B cell (primary cell): ENCODE measurements at regions of chr5 and their contacts with region 1.

Region 1: DNA sequence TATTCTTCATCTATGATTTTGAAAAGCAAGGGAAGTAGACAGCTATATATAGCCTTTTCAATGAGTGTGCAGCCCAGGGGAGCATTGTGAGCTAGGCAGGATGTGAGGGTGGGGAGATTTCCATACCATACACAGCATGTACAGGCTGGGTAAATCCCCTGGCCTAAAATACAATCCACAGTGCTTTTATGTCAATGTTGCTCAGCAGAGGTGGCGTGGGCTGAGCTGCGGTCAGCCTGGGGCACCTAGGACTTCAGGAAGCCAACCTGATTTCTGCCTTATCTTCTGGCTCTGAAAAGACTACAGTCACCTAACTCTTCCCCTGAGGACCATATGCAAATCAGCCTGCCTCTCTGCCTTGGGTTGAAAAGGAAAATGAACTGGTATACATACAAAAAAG is 6.3 kb upstream of the GARIN3 start:
- DNase-seq: peak; percentile 71
- ATAC-seq: peak; percentile 91
- H3K4me3 ChIP-seq: peak overlapping the region in 3 of 5 experiments; percentile 4 to 34 (median 9)
- H3K4me3 Mint-ChIP-seq: peak overlapping the region; percentile 48
- H3K27ac ChIP-seq: peak overlapping the region; percentile 45 to 57
- H3K27ac Mint-ChIP-seq: peak overlapping the region; percentile 65
- H3K4me1 ChIP-seq: peaks cover 13 to 16% of the 10 kb centered on the region in 2 donors
- H3K4me1 Mint-ChIP-seq: peaks cover 24% of the 10 kb centered on the region
- H3K27me3 ChIP-seq: no peaks in the 10 kb centered on the region
- H3K27me3 Mint-ChIP-seq: no peaks in the 10 kb centered on the region
- CTCF ChIP-seq: no peak

Region 2: DNA sequence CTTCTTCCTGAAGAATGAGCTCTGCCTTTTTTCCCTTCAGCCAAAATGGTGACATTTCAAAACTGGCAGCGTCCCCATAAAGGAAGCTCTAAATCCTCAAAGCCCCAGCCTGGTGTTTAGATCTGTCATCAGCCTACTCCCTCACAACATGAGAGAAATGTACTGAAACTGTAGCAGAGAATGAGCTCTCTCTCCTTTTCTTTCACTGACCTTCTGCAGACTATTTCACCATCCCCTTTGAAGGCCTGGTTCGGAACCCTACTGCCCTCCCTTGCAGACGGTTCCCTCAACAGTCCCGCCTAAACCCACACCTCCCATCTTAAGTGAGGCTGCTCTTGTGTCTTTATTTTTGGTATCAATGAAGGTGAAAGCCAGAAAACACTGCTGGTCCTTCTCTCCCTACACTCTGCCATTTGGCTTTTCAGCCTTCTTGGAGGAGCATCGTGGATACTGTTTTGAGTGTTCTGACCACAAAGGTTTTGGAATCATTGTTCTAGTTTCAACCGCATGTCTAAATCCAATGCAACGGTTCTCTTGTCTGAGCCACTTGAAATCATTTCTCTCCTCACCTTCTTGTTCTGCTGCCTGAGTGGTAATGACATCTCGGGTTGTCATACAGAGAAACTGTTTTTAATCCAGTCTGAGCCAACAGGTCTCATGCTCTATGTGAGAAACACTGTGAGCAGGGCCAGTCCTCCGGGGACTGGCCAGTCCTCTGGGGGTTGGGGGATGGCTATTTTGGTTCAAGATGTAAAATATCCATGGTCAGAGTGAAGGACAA is 47.3 kb after region 1 on chr5:
- CTCF ChIA-PET with region 1: no interaction called
- POLR2A ChIA-PET with region 1: no interaction called
- intact Hi-C with region 1: loop called (anchors 5 kb)
- DNase-seq: no peak
- ATAC-seq: no peak
- H3K4me3 ChIP-seq: no peak overlapping the region
- H3K4me3 Mint-ChIP-seq: no peak overlapping the region
- H3K27ac ChIP-seq: no peak overlapping the region
- H3K27ac Mint-ChIP-seq: no peak overlapping the region
- H3K4me1 ChIP-seq: peaks cover 40 to 42% of the 10 kb centered on the region in 2 donors
- H3K4me1 Mint-ChIP-seq: peaks cover 52% of the 10 kb centered on the region
- H3K27me3 ChIP-seq: no peaks in the 10 kb centered on the region
- H3K27me3 Mint-ChIP-seq: no peaks in the 10 kb centered on the region
- CTCF ChIP-seq: no peak

Region 3: DNA sequence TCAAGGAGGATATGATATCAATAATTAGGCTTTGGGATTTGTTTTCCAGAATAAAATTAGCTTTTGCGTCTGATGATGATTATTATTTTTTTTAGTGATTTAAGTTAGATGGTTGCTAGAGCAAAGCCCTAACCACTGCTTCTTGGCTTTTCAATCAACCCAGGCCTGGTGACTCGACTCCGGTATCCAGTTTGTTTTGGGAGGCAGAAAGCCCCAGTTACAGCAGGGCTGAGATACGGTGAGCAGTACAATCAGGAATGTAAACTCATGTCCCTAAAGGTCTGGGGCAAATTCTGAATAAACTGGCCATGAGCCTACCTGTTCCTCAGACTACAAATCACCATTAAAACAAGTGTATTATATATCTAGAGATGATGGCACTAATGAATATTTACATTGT is 69.1 kb after region 1 on chr5:
- CTCF ChIA-PET with region 1: no interaction called
- POLR2A ChIA-PET with region 1: no interaction called
- intact Hi-C with region 1: no loop called
- DNase-seq: no peak
- ATAC-seq: no peak
- H3K4me3 ChIP-seq: no peak overlapping the region
- H3K4me3 Mint-ChIP-seq: no peak overlapping the region
- H3K27ac ChIP-seq: no peak overlapping the region
- H3K27ac Mint-ChIP-seq: no peak overlapping the region
- H3K4me1 ChIP-seq: no peaks in the 10 kb centered on the region
- H3K4me1 Mint-ChIP-seq: no peaks in the 10 kb centered on the region
- H3K27me3 ChIP-seq: no peaks in the 10 kb centered on the region
- H3K27me3 Mint-ChIP-seq: no peaks in the 10 kb centered on the region
- CTCF ChIP-seq: no peak